Breast epithelium (tissue), 4 donors: ENCODE measurements at regions of chr6 and their contacts with region 1.

Region 1: DNA sequence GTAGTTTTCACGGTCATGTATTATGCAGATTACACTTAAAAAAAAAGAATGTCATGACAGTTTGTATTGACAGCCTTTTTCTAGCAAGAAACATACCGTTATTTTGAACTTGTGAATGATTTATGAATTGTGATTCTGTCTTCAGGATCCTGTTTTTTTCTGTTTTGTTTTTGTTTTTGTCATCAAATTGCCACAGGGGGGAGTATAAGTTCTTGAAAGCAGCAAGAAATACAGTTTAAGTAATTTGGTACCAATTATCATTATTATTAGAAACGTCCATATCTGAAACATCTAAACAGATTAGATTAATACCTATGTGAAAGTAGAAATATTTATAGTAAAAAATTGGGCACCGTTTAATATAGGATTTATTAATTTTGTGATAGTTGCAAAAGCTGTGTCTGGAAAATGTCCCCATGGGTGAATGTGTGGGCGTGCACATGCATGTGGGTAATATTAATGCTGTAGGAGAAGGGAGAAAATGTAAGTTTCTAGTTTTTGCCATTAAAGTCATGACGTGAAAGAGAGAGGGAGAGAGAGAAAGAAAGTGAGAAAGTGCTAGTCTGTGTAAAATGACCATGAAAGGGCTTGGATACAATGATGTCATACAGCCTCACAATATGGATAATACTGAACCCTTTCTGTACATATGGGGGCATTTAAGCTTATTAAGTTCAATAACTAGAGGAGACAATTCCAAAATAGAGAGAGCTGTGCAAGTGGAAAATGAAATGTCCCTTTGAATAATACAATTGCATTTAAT is 9.4 kb upstream of the CCN2 start:
- DNase-seq: no peak
- H3K4me3 ChIP-seq: no peak overlapping the region
- H3K27ac ChIP-seq: no peak overlapping the region
- H3K4me1 ChIP-seq: no peaks in the 10 kb centered on the region
- H3K27me3 ChIP-seq: no peaks in the 10 kb centered on the region
- CTCF ChIP-seq: no peak
- POLR2A ChIP-seq: no peak

Region 2: DNA sequence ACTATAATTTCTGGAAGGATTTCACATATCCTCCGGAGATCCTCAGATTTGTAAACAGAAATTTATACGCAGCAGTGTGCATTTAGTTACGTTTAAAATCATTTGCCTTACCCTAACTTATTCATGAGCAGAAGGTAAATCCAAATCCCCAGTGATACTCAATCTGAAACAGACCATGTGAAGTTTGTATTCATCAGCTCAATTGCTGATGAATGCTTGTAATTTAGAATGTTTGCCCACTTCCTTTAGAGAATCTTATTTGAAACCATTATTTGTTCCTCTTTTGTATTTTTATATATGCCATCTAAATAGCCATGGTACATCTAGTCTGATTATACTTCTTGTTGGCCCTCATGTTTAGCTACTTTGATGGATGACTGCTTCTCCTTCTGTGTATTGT is 683.0 kb after region 1 on chr6:
- intact Hi-C with region 1: loop called (anchors 5 kb)
- DNase-seq: no peak
- H3K4me3 ChIP-seq: no peak overlapping the region
- H3K27ac ChIP-seq: no peak overlapping the region
- H3K4me1 ChIP-seq: no peaks in the 10 kb centered on the region
- H3K27me3 ChIP-seq: no peaks in the 10 kb centered on the region
- CTCF ChIP-seq: no peak
- POLR2A ChIP-seq: no peak